Dendritic cell treated with granulocyte-macrophage colony-stimulating factor and Interleukin-4, amounts not matched to agents 40 ng/mL and 50 ng/mL, for 4 days (primary cell): ENCODE measurements at regions of chr2 and their contacts with region 1.

Region 1: GRCh38 chr2:206127656-206128055 is 31.6 kb downstream of the NDUFS1 start:
- H3K4me3 Mint-ChIP-seq: no peak overlapping the region
- H3K27ac Mint-ChIP-seq: no peak overlapping the region
- H3K4me1 Mint-ChIP-seq: no peaks in the 10 kb centered on the region
- H3K27me3 Mint-ChIP-seq: no peaks in the 10 kb centered on the region

Region 2: GRCh38 chr2:205060269-205060668 is 1067.4 kb before region 1 on chr2:
- intact Hi-C with region 1: no loop called
- H3K4me3 Mint-ChIP-seq: no peak overlapping the region
- H3K27ac Mint-ChIP-seq: no peak overlapping the region
- H3K4me1 Mint-ChIP-seq: no peaks in the 10 kb centered on the region
- H3K27me3 Mint-ChIP-seq: no peaks in the 10 kb centered on the region

Region 3: GRCh38 chr2:206004004-206004693 is 123.5 kb before region 1 on chr2:
- intact Hi-C with region 1: loop called (anchors 5 kb)
- H3K4me3 Mint-ChIP-seq: no peak overlapping the region
- H3K27ac Mint-ChIP-seq: no peak overlapping the region
- H3K4me1 Mint-ChIP-seq: peaks cover 2% of the 10 kb centered on the region
- H3K27me3 Mint-ChIP-seq: no peaks in the 10 kb centered on the region

Region 4: DNA sequence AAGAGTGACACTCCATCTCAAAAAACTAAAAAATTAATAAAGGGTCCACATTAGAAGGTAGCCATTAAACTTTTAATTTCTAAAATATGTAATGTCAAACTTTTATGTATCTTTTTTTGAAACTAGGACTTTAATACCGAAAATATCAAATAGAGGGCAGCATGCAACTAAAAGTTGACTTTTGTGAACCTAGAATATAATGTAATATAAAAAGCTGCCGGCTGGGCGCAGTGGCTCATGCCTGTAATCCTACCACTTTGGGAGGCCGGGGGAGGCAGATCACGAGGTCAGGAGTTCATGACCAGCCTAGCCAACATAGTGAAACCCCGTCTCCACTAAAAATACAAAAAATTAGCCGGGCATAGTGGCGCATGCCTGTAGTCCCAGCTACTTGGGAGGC is 104.5 kb before region 1 on chr2:
- intact Hi-C with region 1: loop called (anchors 10 kb)
- H3K4me3 Mint-ChIP-seq: no peak overlapping the region
- H3K27ac Mint-ChIP-seq: no peak overlapping the region
- H3K4me1 Mint-ChIP-seq: no peaks in the 10 kb centered on the region
- H3K27me3 Mint-ChIP-seq: no peaks in the 10 kb centered on the region

Region 5: DNA sequence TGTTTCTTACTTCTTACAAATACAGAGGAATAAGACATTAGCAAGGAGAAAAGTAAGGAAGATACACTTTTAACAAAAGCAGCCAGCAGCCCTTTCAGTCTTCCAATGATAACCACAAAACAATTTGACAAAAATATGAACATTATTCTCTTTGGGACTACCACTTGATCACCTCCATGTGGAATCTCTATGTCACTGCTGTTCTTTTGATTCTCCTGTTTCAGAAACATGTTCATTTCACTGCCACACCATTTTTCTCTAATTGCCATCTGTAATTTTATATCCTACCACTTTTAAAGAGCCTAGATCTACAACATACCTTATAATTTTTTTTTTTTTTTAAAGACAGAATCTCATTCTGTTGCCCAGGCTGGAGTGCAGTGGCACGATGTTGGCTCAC is 52.5 kb before region 1 on chr2:
- intact Hi-C with region 1: no loop called
- H3K4me3 Mint-ChIP-seq: no peak overlapping the region
- H3K27ac Mint-ChIP-seq: no peak overlapping the region
- H3K4me1 Mint-ChIP-seq: peaks cover 36% of the 10 kb centered on the region
- H3K27me3 Mint-ChIP-seq: no peaks in the 10 kb centered on the region

Region 6: GRCh38 chr2:206343816-206344215 is 216.2 kb after region 1 on chr2:
- intact Hi-C with region 1: no loop called
- H3K4me3 Mint-ChIP-seq: no peak overlapping the region
- H3K27ac Mint-ChIP-seq: no peak overlapping the region
- H3K4me1 Mint-ChIP-seq: no peaks in the 10 kb centered on the region
- H3K27me3 Mint-ChIP-seq: no peaks in the 10 kb centered on the region

Region 7: DNA sequence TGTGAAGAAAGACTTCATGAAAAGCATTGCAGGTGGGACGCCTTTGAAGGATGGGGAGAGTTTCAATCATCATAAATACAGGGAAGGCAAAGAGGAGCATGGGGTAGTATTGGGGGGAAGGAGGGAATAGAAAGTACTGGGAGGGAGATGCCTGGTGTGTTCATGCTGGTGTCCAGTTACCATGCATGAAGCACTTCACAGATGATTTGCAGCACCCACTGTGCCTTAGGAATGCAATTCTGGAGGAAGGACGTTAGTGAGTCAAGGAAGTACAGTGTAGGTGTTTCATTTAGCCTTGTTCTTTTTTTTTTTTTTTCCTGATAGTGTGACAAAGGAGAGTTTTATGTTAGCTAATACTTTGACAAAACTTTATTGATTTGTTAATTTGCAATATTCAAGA is 352.5 kb after region 1 on chr2:
- intact Hi-C with region 1: no loop called
- H3K4me3 Mint-ChIP-seq: no peak overlapping the region
- H3K27ac Mint-ChIP-seq: no peak overlapping the region
- H3K4me1 Mint-ChIP-seq: no peaks in the 10 kb centered on the region
- H3K27me3 Mint-ChIP-seq: no peaks in the 10 kb centered on the region